T-cell (primary cell): ENCODE measurements at regions of chr22 and their contacts with region 1.

Region 1: DNA sequence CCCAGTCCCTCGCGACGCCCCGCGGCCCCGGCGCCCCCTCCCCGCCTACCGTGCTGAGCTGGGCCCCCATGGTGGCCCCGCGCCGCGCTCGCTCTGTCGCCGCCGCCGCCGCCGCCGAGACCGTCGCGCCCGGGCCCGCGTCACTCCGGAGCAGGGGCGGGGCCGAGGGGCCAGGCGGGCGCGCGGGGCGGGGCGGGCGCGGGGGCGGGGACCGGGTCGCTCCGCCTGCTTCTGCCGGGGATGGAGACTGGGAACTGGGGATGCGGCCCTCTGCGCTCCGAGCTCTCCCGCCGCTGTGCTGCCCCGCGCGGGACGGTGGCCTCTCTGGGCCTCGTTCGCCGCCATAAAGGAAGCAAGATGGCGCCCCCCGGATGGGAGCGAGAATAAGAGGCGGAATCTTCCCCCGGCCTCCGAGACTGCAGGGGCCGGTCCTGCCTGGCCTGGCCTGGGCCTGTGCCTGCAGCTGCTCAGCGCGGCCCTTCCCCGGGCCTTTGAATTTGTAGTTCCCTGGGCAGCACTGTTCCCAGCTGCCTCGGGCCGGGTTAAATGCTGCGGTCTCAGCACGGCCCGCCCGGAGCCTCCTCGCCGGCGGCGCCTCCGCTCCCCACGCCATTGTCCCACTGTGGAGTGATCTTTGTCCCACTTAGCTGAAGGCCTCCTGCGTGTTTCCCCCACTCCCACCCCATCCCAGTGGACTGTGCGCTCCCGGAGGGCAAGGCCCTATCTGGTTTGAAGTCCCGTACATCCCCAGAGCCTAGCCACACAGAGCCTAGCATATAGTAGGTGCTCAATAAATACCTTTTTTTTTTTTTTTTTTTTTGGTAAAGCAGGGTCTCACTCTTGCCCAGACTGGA is at the start of gene CYB5R3:
- DNase-seq: peak; percentile 49 to 83 (median 65)
- ATAC-seq: peak; percentile 81 to 87 (median 83)
- H3K4me3 ChIP-seq: peak within 1 kb of the TSS; percentile 76 to 80
- H3K4me3 Mint-ChIP-seq: peak within 1 kb of the TSS; percentile 90 to 92 (median 92)
- H3K27ac ChIP-seq: peak within 1 kb of the TSS; percentile 72
- H3K27ac Mint-ChIP-seq: peak within 1 kb of the TSS; percentile 85 to 92
- H3K4me1 ChIP-seq: peaks cover 4 to 51% of the 10 kb centered on the region in 2 experiments
- H3K4me1 Mint-ChIP-seq: peaks cover 32 to 38% (median 35%) of the 10 kb centered on the region in 3 donors
- H3K27me3 ChIP-seq: peaks cover 0 to 11% of the 10 kb centered on the region in 2 experiments
- H3K27me3 Mint-ChIP-seq: no peaks in the 10 kb centered on the region
- total RNA-seq, gene CYB5R3: 40.8 to 58.6 (median 51.0) TPM

Region 2: GRCh38 chr22:42913874-42914510 is 264.5 kb after region 1 on chr22:
- CTCF ChIA-PET with region 1: no interaction called
- POLR2A ChIA-PET with region 1: interaction called in 1 of 2 experiments, 12 read pairs
- DNase-seq: no peak
- ATAC-seq: no peak
- H3K4me3 ChIP-seq: no peak overlapping the region
- H3K4me3 Mint-ChIP-seq: no peak overlapping the region
- H3K27ac ChIP-seq: no peak overlapping the region
- H3K27ac Mint-ChIP-seq: no peak overlapping the region
- H3K4me1 ChIP-seq: peaks cover 0 to 3% of the 10 kb centered on the region in 2 experiments
- H3K4me1 Mint-ChIP-seq: peaks cover 5 to 18% (median 15%) of the 10 kb centered on the region in 3 donors
- H3K27me3 ChIP-seq: no peaks in the 10 kb centered on the region
- H3K27me3 Mint-ChIP-seq: no peaks in the 10 kb centered on the region